Activated CD4-positive, alpha-beta T cell treated with anti-CD3 and anti-CD28 coated beads for 36 hours (primary cell): ENCODE measurements at regions of chr13 and their contacts with region 1.

Region 1: GRCh38 chr13:26074706-26075105 is 22.9 kb upstream of the SHISA2 start:
- DNase-seq: no peak
- ATAC-seq: no peak
- H3K4me3 Mint-ChIP-seq: no peak overlapping the region
- H3K27ac Mint-ChIP-seq: no peak overlapping the region
- H3K4me1 Mint-ChIP-seq: no peaks in the 10 kb centered on the region
- H3K27me3 Mint-ChIP-seq: peaks cover 16% of the 10 kb centered on the region

Region 2: DNA sequence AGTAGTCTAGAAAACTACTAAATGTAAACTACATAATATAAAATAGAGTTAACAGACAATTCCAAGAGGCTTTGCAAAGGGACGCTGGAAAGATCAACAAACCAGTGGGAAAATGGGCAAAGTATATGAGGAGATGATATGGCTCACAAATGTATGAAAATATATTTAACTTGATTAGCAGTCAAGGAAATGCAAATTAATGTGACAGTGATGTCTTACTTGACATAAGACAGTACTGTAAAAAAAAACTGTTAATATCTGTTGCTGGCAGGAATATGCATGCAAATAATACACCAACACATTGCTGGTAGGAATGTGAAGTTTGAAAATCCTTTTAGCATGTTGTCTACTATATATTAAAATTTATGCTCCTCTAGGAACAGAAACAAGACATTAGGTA is 566.9 kb before region 1 on chr13:
- CTCF ChIA-PET with region 1: no interaction called
- POLR2A ChIA-PET with region 1: no interaction called
- intact Hi-C with region 1: loop called in 1 of 2 experiments (anchors 5 kb)
- DNase-seq: no peak
- ATAC-seq: no peak
- H3K4me3 Mint-ChIP-seq: no peak overlapping the region
- H3K27ac Mint-ChIP-seq: no peak overlapping the region
- H3K4me1 Mint-ChIP-seq: no peaks in the 10 kb centered on the region
- H3K27me3 Mint-ChIP-seq: peaks cover 3% of the 10 kb centered on the region